Activated CD4-positive, alpha-beta T cell treated with anti-CD3 and anti-CD28 coated beads, Interleukin-2, amount 10 ng/mL, durations not matched to agents 24 days and 14 days (primary cell): ENCODE measurements at regions of chr6 and their contacts with region 1.

Region 1: DNA sequence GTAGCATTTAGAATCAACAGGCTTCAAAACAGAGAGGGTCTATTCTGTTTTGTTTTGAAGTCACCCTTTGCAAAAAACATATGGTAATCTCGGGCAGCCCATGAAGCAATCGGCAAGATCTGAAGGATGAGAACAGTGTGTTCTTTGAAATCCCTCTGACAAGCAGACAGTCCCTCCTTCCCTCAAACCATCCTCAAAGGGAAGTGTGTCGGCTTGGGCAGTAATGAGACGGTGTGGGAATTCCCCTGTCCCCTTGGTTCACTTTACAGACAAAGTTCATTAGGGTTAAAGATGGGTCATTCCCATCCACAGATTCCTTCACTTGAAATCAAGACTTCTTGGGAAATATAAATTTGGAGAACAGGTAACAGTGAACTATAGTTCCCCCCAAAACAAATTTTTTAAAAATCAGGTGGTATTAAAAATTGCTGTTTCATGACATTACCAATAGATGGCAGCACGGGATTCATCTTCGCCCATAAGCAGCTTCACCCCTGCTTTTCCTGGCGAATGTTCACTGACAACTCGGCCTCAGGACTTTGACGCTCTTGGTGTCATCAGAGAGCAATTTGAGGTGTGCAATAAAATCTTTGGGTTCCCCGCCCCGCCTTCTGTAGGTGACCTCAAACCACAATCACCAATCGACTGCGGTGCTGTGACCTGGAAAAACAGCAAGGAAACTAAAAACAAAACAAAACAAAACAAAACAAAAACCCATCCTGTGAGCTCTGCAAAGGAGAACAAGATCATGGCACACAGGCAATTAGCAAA is 159.3 kb upstream of the TNFAIP3 start:
- DNase-seq: peak; percentile 96
- H3K4me3 Mint-ChIP-seq: peak overlapping the region; percentile 80
- H3K27ac Mint-ChIP-seq: peak overlapping the region; percentile 98
- H3K4me1 Mint-ChIP-seq: peaks cover 74% of the 10 kb centered on the region
- H3K27me3 Mint-ChIP-seq: peaks cover 1% of the 10 kb centered on the region

Region 2: DNA sequence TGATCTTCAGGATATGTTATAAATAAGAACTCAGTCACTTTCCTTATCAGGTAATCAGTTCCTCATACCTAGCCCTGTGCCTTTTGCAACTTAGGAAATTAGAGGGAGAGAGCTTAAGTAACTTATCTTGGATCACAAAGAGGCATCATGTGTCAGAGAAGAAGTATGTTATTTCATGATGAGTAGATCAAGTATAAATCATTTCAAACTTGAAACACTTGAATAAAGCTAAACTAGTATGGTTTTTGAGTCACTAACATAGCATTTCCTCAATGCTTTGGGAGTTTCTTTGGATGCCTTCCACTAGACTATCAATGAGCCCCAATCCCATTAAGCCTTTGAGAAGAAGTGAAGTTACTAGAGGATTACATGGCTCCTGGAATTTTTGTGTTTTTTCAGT is 56.7 kb after region 1 on chr6:
- intact Hi-C with region 1: no loop called
- DNase-seq: no peak
- H3K4me3 Mint-ChIP-seq: no peak overlapping the region
- H3K27ac Mint-ChIP-seq: no peak overlapping the region
- H3K4me1 Mint-ChIP-seq: peaks cover 25% of the 10 kb centered on the region
- H3K27me3 Mint-ChIP-seq: no peaks in the 10 kb centered on the region

Region 3: DNA sequence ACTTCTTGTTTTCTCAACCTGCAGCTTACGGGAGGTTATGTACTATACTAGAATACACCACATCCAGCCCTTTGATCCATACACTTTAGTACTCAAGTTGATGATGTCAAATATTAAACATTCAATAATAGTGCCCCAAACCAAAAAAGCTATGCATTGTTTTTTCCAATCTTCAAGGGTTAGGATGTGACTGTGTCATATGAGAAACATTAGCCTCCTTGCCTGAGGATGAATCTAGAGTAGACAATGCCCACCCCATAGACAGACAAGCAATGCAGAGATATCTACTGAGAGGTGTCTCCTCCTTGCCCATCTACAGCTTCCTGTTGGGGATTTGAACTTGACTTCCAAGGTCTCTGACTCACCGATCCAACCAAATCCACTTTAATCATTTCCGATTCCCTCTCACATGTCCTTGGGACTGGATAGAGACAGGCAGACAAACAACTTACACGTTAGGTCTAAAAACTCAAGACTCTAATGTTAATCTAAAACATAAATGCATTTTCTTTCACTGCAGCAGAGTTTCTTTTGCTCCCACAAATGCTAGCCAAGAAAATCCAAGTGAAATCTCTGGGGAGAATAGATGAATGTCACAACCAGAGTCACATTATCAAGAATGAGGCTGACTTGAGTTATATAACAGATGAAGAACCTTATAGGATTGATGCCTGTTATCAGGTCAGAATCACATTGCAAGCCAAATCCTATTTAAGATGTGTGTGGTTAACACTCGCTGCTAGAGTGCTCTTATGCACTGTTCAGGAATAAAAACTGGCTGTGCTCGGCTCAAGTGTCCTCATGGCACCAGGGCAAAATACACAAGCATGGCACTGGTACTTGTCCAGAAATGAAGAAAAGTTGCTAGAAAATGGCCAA is 83.7 kb after region 1 on chr6:
- intact Hi-C with region 1: loop called (anchors 1 kb)
- DNase-seq: no peak
- H3K4me3 Mint-ChIP-seq: peak overlapping the region; percentile 29
- H3K27ac Mint-ChIP-seq: peak overlapping the region; percentile 78
- H3K4me1 Mint-ChIP-seq: peaks cover 62% of the 10 kb centered on the region
- H3K27me3 Mint-ChIP-seq: no peaks in the 10 kb centered on the region

Region 4: DNA sequence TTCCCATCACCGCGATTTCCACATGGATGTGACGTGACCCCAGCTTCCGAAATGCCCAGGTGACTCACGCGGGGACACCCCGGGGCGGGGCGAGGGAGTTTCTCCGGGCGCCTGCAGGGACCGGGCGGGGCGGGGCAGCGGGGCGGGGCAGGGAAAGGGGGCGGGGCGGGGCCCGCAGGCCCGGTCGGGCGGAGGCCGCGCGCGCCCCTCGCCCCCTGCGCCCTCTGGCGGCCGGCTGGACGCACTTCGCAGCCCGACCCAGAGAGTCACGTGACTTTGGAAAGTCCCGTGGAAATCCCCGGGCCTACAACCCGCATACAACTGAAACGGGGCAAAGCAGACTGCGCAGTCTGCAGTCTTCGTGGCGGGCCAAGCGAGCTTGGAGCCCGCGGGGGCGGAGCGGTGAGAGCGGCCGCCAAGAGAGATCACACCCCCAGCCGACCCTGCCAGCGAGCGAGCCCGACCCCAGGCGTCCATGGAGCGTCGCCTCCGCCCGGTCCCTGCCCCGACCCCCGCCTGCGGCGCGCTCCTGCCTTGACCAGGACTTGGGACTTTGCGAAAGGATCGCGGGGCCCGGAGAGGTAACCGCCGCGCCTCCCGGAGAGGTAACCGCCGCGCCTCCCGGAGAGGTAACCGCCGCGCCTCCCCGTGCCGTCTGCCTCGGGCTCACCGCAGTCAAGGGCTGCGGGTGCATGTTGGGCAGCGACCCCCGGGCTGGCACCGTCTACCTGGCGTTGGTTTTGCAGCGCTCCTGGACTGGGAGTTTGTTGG is 159.3 kb after region 1 on chr6 and contains the start of gene TNFAIP3:
- intact Hi-C with region 1: loop called (anchors 1 kb)
- DNase-seq: peak; percentile 99
- H3K4me3 Mint-ChIP-seq: peak within 1 kb of the TSS; percentile 87
- H3K27ac Mint-ChIP-seq: peak within 1 kb of the TSS; percentile 93
- H3K4me1 Mint-ChIP-seq: peaks cover 25% of the 10 kb centered on the region
- H3K27me3 Mint-ChIP-seq: no peaks in the 10 kb centered on the region
- total RNA-seq, gene TNFAIP3: 249 and 254 TPM in 2 replicates

Region 5: GRCh38 chr6:137927777-137928218 is 220.0 kb after region 1 on chr6:
- intact Hi-C with region 1: loop called (anchors 1 kb)
- DNase-seq: peak; percentile 94
- H3K4me3 Mint-ChIP-seq: peak overlapping the region; percentile 68
- H3K27ac Mint-ChIP-seq: peak overlapping the region; percentile 93
- H3K4me1 Mint-ChIP-seq: peaks cover 63% of the 10 kb centered on the region
- H3K27me3 Mint-ChIP-seq: no peaks in the 10 kb centered on the region

Region 6: DNA sequence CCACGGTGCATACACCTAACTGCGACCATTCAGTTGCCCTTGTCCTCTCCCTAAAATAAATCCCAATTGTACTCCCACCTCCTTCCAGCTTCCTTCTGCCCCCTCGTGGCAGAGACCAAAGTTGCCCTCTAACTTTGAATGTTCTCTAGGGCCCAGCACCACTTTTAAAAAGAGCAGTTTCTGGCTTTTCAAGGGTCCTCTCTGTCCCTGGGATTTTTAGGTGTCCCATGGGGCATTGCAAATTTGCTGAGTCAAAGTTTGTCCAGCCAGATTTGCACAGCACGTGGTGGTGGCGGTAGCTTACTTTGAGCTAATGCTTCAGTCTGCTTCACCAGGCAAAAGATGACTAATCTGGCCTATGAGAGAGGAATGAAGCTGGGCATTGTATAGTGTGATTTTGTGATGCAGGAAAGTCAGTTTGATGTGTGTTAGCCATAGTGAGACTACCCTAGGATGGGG is 299.3 kb after region 1 on chr6:
- intact Hi-C with region 1: loop called (anchors 1 kb)
- DNase-seq: peak; percentile 77
- H3K4me3 Mint-ChIP-seq: no peak overlapping the region
- H3K27ac Mint-ChIP-seq: no peak overlapping the region
- H3K4me1 Mint-ChIP-seq: peaks cover 12% of the 10 kb centered on the region
- H3K27me3 Mint-ChIP-seq: peaks cover 3% of the 10 kb centered on the region